K562 (cell line): ENCODE measurements at regions of chr17 and their contacts with region 1.

Region 1: DNA sequence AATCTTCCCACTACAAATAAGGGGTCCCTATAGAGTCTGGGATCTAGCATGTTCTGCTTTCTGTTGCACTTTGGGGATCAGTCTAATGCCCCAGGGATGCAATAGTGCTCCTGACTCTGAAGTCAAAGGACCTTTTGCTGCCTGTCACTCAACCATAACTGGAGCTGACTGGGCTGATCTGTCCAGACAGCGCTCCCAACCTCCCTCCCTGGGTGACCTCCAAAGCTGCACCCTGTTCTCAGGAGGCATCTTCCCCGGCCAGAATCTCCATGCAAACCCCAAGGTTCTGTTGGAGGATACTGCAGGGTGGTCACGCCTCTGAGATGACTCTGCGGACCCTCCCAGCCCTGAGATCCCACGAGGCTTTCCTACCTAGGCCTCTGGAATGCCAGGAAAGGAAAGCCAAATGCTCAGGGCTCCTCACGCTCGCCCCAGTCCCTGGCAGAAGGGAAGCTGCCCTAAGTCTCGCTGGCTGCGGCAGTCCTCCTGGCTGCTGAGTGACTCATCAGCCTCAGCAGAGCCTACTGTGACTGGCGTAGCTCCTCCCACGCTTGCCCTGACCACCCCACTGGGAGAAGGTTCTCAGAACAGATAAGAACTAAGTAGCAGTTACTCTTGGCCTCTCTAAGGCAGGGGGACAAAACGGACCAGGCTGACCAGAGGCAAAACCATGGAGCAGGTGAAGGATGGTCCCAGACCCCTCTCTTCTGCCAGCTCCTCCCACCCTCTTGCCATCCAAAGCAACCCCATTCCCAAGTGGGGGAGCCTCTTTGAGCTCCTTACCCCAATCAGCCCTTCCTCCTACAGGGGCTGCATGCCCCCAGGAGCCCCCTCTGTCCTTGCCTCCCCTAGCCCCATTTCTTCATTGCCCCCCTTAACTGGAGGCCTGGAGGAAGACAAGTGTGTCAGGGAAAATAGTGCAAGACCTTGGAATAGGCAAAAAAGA is 124.1 kb upstream of the TNRC6C start:
- DNase-seq: peak; percentile 95 to 98 (median 96)
- ATAC-seq: peak; percentile 100
- H3K4me3 ChIP-seq: peak overlapping the region; percentile 26
- H3K27ac ChIP-seq: peak overlapping the region; percentile 71
- H3K4me1 ChIP-seq: peaks cover 31 to 45% of the 10 kb centered on the region in 2 experiments
- H3K27me3 ChIP-seq: no peaks in the 10 kb centered on the region
- CTCF ChIP-seq: no peak
- EP300 ChIP-seq: peak; percentile 81
- POLR2A ChIP-seq: no peak
- RAD21 ChIP-seq: peak in 1 of 2 experiments; percentile 28; a peak in 2 of 4 replicates

Region 2: DNA sequence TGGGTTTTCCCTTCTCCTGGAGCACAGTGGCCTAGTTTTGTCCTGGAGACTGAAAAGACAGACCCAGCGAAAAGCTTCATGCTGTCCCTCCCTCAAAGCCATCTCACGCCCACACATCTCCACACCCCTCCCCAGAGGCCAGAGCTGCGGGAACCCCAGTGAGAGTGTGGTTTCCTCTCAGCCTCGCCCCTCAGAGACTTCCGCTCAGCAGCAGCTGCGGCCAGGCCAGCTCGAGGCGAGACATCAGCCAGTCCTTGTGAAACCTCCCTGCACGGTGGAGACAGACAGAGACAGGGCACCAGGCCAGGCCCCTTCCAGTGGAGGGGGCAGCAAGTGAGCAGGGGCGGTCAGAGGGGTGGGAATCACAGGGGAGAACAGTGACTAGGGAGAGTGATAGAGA is 47.1 kb after region 1 on chr17:
- CTCF ChIA-PET with region 1: no interaction called
- POLR2A ChIA-PET with region 1: interaction called, 3 read pairs
- in situ Hi-C with region 1: no loop called
- intact Hi-C with region 1: loop called (anchors 10 kb)
- DNase-seq: peak; percentile 58 to 71 (median 64)
- ATAC-seq: peak; percentile 79
- H3K4me3 ChIP-seq: no peak overlapping the region
- H3K27ac ChIP-seq: no peak overlapping the region
- H3K4me1 ChIP-seq: peaks cover 24 to 32% of the 10 kb centered on the region in 2 experiments
- H3K27me3 ChIP-seq: peaks cover 3 to 34% of the 10 kb centered on the region in 2 experiments; a peak in 3 of 5 replicates
- CTCF ChIP-seq: no peak
- EP300 ChIP-seq: no peak
- POLR2A ChIP-seq: no peak
- RAD21 ChIP-seq: no peak